Dendritic cell treated with granulocyte-macrophage colony-stimulating factor and Interleukin-4, amounts not matched to agents 40 ng/mL and 50 ng/mL, for 4 days (primary cell): ENCODE measurements at regions of chr11 and their contacts with region 1.

Region 1: DNA sequence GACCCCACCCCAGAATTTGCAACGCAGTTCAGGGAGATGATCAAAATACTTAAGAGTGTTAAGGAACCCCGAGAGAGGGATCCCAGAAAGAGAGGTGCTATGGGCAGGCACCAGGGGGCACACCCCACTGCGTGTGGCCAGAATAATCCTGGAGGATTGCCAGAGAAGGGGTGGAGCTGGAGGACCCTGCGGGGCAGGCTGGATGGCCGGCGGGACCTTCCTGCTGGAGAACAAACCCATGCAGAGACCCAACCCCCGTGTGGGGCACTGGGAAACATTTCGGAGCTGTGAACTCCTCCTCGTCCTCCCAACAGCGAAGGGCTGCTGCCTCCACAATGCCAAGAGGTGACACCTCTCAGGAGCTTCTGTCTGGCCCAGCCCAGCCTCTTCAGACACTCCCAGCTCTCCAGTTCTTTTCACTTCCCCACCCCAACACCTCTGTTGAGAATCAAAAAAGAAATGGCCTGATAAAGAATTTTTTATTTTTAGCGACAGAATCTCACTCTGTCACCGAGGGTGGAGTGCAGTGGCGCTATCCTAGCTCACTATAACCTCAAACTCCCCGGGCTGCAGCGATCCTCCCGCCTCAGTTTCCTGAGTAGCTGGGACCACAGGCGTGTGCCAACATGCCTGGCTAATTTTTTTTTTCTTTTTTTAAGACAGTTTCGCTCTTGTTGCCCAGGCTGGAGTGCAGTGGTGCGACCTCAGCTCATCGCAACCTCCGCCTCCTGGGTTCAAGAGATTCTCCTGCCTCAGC is 25.6 kb downstream of the RHOD start:
- H3K4me3 Mint-ChIP-seq: peak overlapping the region; percentile 44
- H3K27ac Mint-ChIP-seq: peak overlapping the region; percentile 46
- H3K4me1 Mint-ChIP-seq: peaks cover 38% of the 10 kb centered on the region
- H3K27me3 Mint-ChIP-seq: peaks cover 21% of the 10 kb centered on the region

Region 2: GRCh38 chr11:66950113-66950535 is 132.1 kb before region 1 on chr11:
- intact Hi-C with region 1: no loop called
- H3K4me3 Mint-ChIP-seq: no peak overlapping the region
- H3K27ac Mint-ChIP-seq: no peak overlapping the region
- H3K4me1 Mint-ChIP-seq: peaks cover 3% of the 10 kb centered on the region
- H3K27me3 Mint-ChIP-seq: peaks cover 5% of the 10 kb centered on the region

Region 3: DNA sequence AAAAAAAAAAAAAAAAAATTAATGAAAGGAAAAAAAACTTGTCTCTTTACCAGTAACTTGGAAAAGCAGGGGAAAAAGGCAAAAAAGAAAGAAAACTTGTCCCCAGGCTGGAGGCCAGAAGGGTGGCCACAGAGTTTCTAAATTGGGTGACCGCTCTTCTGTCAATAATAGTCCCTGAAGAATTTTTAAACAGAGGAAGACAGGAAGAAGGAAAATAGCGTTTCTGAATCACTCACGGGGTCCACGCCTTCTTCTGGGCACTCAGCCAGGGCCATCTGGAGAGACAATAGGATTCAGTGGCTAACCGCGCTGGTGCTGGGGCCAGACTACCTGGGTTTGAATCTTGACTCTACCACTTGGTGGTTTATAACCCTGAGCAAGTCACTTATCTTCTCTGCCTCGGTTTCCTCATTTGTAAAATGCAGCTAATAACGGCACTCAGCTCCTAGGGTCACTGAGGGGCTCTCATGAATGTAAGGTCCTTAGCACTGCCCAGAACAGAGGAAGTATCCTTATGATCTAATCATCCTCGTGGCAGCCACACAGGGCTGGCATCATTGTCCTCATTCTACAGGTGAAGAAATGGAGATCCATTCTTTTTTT is 100.1 kb before region 1 on chr11:
- intact Hi-C with region 1: no loop called
- H3K4me3 Mint-ChIP-seq: no peak overlapping the region
- H3K27ac Mint-ChIP-seq: no peak overlapping the region
- H3K4me1 Mint-ChIP-seq: peaks cover 34% of the 10 kb centered on the region
- H3K27me3 Mint-ChIP-seq: peaks cover 48% of the 10 kb centered on the region

Region 4: GRCh38 chr11:67119585-67120391 is 37.6 kb after region 1 on chr11:
- intact Hi-C with region 1: loop called (anchors 5 kb)
- H3K4me3 Mint-ChIP-seq: peak overlapping the region; percentile 99
- H3K27ac Mint-ChIP-seq: peak overlapping the region; percentile 96
- H3K4me1 Mint-ChIP-seq: peaks cover 33% of the 10 kb centered on the region
- H3K27me3 Mint-ChIP-seq: no peaks in the 10 kb centered on the region

Region 5: DNA sequence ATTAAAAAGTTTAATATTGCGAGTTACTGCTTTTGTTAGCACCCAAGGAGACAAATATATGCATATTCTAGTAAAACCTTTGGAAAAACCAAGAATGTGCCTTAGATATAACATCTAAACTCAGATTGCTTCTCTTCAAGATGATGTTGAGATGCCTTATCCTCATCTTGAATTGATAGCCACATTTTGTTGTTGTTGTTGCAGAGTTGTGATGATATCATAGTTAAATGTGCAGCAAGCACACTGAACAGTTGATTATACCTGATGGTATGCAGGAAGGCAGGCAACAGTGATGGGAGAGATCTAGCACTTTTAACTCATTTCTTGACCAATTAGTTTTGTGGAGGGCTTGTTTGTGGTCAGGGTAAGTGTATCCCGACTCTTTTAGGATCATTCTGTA is 84.9 kb after region 1 on chr11:
- intact Hi-C with region 1: loop called (anchors 5 kb)
- H3K4me3 Mint-ChIP-seq: no peak overlapping the region
- H3K27ac Mint-ChIP-seq: no peak overlapping the region
- H3K4me1 Mint-ChIP-seq: peaks cover 47% of the 10 kb centered on the region
- H3K27me3 Mint-ChIP-seq: no peaks in the 10 kb centered on the region